ENCODE measurements at regions of chr10 and their contacts with region 1.

Region 1: GRCh38 chr10:4131407-4132228 is 346.6 kb upstream of the KLF6 start:
- DNase-seq: peak; percentile 63
- H3K4me3 Mint-ChIP-seq: no peak overlapping the region
- H3K27ac Mint-ChIP-seq: no peak overlapping the region
- H3K4me1 Mint-ChIP-seq: peaks cover 41% of the 10 kb centered on the region
- H3K27me3 Mint-ChIP-seq: no peaks in the 10 kb centered on the region

Region 2: GRCh38 chr10:3961082-3961481 is 170.5 kb before region 1 on chr10:
- CTCF ChIA-PET with region 1: no interaction called
- POLR2A ChIA-PET with region 1: interaction called, 16 read pairs
- DNase-seq: peak; percentile 76
- H3K4me3 Mint-ChIP-seq: peak overlapping the region; percentile 18
- H3K27ac Mint-ChIP-seq: peak overlapping the region; percentile 80
- H3K4me1 Mint-ChIP-seq: peaks cover 49% of the 10 kb centered on the region
- H3K27me3 Mint-ChIP-seq: no peaks in the 10 kb centered on the region